Heart left ventricle (tissue), 16 donors: ENCODE measurements at regions of chr16 and their contacts with region 1.

Region 1: DNA sequence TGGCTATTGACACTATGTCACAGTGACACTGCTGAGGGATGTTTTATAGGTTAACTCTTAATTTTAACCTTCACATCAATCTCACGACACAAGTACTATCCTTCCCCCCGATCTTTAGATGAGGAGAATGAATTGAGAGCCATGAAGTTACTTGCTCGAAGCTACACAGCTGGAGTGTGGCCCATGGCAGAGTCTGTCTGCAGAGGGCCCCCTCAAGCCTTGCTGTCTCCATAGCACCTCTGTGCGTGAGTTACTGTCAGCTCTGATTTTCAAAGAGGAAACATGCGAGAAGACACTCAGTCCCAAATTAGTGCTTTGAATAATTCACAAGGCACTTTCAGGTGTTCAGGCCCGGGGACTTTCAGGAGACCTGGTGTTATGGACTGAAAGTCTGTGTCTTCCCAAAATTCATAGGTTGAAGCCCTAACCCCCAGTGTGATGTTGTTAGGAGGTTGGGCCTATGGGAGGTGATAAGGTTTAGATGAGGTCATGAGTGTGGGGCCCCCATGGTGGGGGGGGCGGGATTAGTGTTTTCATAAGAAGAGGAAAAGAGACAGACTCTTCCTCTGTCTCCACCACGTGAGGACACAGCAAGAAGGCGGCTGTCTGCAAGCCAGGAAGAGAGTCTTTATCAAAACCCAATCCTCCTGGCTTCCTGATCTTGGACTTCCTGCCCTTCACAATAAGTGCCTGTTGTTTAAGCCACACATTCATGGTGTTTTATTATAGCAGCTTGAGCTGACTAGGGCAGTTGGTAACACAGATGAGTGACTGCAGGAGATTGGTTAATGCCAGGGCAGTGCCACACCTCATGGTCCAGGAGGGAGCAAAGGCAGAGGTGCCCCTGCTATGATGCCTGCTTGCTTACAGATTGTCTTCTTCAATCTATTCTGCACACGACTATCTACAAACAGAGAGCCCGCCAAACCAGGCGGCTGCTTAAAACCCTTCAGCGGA is 281.8 kb downstream of the HAPSTR1 start:
- DNase-seq: no peak
- ATAC-seq: peak in 1 of 4 donors; percentile 44
- H3K4me3 ChIP-seq: no peak overlapping the region
- H3K27ac ChIP-seq: peak overlapping the region in 1 of 12 donors; percentile 0
- H3K4me1 ChIP-seq: peaks cover 0 to 27% (median 0%) of the 10 kb centered on the region in 12 donors
- H3K27me3 ChIP-seq: no peaks in the 10 kb centered on the region
- CTCF ChIP-seq: peak in 2 of 12 donors; percentile 9 to 23
- POLR2A ChIP-seq: no peak

Region 2: DNA sequence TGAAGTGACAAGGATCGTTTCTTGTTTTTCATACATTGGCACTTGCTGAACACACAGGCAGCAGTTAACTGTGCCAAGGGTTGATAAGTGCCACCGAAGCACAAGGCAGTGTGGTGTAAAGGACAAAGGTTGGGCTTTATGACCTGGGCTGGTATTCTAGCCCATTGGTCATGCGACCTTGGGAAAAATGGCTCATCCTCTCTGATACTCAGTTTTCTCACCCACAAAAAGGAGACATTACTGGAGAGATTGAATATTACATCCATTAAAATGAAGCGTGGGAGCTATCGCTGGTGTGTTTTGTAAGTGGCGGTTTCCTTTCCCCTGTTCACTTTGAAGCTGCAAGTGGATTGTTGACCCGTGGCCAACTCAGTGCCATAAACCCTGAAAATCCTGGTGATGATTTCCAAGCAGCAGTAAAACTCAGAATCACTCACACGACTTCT is 64.8 kb before region 1 on chr16:
- intact Hi-C with region 1: loop called in 1 of 10 experiments (anchors 5 kb)
- DNase-seq: no peak
- ATAC-seq: peak; percentile 53 to 81 (median 60)
- H3K4me3 ChIP-seq: no peak overlapping the region
- H3K27ac ChIP-seq: no peak overlapping the region
- H3K4me1 ChIP-seq: peaks cover 0 to 17% (median 0%) of the 10 kb centered on the region in 12 donors
- H3K27me3 ChIP-seq: peaks cover 0 to 4% (median 0%) of the 10 kb centered on the region in 9 donors
- CTCF ChIP-seq: no peak
- POLR2A ChIP-seq: no peak

Region 3: DNA sequence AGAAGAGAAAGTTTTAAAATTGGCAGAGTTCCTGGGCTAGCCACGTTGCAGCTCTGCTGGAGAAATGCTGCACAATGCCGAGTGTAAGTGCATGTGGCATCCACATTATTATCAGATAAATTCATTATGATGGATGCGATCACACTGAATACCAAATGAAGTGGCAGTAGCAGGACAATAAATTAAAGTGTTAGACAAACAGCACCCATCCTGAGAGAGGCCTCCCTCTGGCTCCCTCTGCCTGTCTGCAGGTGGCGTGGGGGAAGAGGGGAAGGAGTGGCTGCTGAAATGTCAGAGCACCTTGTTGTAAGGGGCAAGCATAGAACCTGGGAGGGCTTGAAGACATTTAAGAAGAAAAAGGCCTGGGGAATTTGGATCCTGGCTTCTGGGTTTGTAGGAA is 42.3 kb after region 1 on chr16:
- intact Hi-C with region 1: loop called in 3 of 10 experiments (anchors 5 kb)
- DNase-seq: no peak
- ATAC-seq: no peak
- H3K4me3 ChIP-seq: no peak overlapping the region
- H3K27ac ChIP-seq: no peak overlapping the region
- H3K4me1 ChIP-seq: no peaks in the 10 kb centered on the region
- H3K27me3 ChIP-seq: no peaks in the 10 kb centered on the region
- CTCF ChIP-seq: no peak
- POLR2A ChIP-seq: no peak

Region 4: GRCh38 chr16:9425236-9425635 is 52.0 kb after region 1 on chr16:
- intact Hi-C with region 1: loop called in 2 of 10 experiments (anchors 1 to 2 kb)
- DNase-seq: no peak
- ATAC-seq: no peak
- H3K4me3 ChIP-seq: no peak overlapping the region
- H3K27ac ChIP-seq: peak overlapping the region in 2 of 12 donors; percentile 0 to 50
- H3K4me1 ChIP-seq: peaks cover 0 to 20% (median 0%) of the 10 kb centered on the region in 12 donors
- H3K27me3 ChIP-seq: no peaks in the 10 kb centered on the region
- CTCF ChIP-seq: no peak
- POLR2A ChIP-seq: no peak

Region 5: DNA sequence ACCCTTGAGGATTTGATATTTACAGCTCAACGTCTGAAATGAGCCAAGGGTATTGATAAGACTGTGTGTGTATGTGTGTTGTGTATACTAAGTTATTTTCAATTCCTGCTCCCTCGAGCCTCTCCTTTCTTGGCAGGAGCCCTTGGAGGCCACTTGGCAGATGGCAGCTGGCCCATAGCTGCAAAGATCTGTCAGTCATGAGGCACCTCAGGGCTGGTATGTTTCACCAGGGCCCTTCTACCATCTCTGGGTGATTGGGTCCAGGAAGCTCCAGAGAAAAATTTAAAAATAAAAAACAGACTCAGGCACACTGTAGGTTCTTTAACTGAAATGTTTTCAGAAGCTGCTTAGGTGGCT is 74.0 kb after region 1 on chr16:
- intact Hi-C with region 1: loop called in 3 of 10 experiments (anchors 2 to 5 kb)
- DNase-seq: peak; percentile 70 to 86 (median 78)
- ATAC-seq: peak; percentile 91 to 95 (median 93)
- H3K4me3 ChIP-seq: no peak overlapping the region
- H3K27ac ChIP-seq: peak overlapping the region; percentile 41 to 83 (median 65)
- H3K4me1 ChIP-seq: peaks cover 0 to 10% (median 0%) of the 10 kb centered on the region in 12 donors
- H3K27me3 ChIP-seq: no peaks in the 10 kb centered on the region
- CTCF ChIP-seq: no peak
- POLR2A ChIP-seq: no peak

Region 6: GRCh38 chr16:9489835-9490467 is 116.7 kb after region 1 on chr16:
- intact Hi-C with region 1: loop called in 1 of 10 experiments (anchors 5 kb)
- DNase-seq: peak; percentile 13 to 88 (median 63)
- ATAC-seq: peak; percentile 92 to 97 (median 94)
- H3K4me3 ChIP-seq: no peak overlapping the region
- H3K27ac ChIP-seq: peak overlapping the region in 8 of 12 donors; percentile 12 to 75 (median 45)
- H3K4me1 ChIP-seq: peaks cover 0 to 6% (median 0%) of the 10 kb centered on the region in 12 donors
- H3K27me3 ChIP-seq: peaks cover 0 to 6% (median 0%) of the 10 kb centered on the region in 9 donors
- CTCF ChIP-seq: no peak
- POLR2A ChIP-seq: no peak